Activated CD4-positive, alpha-beta T cell treated with anti-CD3 and anti-CD28 coated beads, Interleukin-2, amount 10 ng/mL, durations not matched to agents 24 days and 14 days (primary cell): ENCODE measurements at regions of chr20 and their contacts with region 1.

Region 1: GRCh38 chr20:54199721-54200176 is 8.1 kb upstream of the PFDN4 start:
- DNase-seq: peak; percentile 90
- H3K4me3 Mint-ChIP-seq: no peak overlapping the region
- H3K27ac Mint-ChIP-seq: no peak overlapping the region
- H3K4me1 Mint-ChIP-seq: no peaks in the 10 kb centered on the region
- H3K27me3 Mint-ChIP-seq: peaks cover 6% of the 10 kb centered on the region

Region 2: DNA sequence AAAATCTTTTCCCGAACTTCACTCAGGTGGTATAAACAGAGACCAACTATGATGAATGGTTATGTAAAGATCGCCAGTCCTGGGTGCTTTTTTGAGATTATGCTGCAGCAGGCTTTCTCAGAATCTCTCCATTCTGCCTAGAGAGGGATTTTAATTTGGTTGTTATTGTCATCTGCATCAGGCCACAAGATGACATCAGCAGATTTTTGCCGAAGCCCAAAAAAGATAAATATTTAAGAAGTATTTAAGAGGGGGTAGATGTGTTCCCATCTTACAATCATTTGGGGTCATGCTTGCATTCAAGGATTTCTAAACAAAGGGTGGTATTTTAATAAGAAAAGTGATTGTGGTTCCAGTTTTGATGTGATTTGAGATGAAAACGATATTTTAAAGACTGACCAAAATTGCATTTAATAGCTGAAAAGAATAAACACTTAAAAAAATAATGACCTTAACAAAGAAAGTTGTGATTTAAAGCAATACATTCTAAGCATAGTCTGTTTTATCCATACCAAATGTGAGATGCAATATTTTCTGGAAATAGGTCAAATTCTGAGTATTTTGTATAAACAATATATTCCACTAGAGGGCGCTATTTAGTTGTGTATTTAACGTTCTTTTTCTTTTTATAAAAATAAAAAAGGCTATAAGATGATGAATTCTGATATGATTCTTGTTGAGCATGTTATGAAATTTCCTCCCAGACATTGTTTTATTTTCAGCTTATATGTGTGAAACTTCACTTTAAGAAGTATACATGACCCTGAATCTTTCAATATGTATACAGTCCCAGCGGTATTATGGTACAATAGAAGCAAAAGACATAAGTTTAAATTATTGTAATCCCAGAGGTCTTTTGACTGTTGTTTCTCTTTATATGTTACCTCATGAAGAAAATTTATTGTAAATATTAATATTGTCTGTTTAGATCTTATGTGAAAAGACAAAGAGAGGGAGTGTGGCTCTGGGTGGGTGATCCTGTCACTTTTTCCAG is 1957.2 kb before region 1 on chr20:
- intact Hi-C with region 1: loop called (anchors 5 kb)
- DNase-seq: no peak
- H3K4me3 Mint-ChIP-seq: no peak overlapping the region
- H3K27ac Mint-ChIP-seq: no peak overlapping the region
- H3K4me1 Mint-ChIP-seq: no peaks in the 10 kb centered on the region
- H3K27me3 Mint-ChIP-seq: peaks cover 2% of the 10 kb centered on the region

Region 3: GRCh38 chr20:53718142-53719021 is 481.4 kb before region 1 on chr20:
- intact Hi-C with region 1: no loop called
- DNase-seq: no peak
- H3K4me3 Mint-ChIP-seq: no peak overlapping the region
- H3K27ac Mint-ChIP-seq: no peak overlapping the region
- H3K4me1 Mint-ChIP-seq: peaks cover 15% of the 10 kb centered on the region
- H3K27me3 Mint-ChIP-seq: no peaks in the 10 kb centered on the region

Region 4: DNA sequence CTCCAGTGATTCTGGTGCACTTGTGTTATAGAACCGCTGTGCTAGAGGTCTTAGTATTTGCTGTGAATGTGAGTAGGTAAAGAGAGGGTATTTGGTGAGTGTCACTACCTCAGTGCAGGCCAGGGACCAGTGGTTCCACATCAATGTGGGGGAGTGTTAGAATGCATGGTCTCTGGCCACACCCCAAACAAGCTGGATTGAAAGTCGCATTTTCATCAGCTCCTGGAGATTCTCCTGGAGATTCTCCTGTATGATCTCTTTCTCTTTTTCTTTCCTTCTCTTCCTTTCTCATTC is 102.6 kb before region 1 on chr20:
- intact Hi-C with region 1: loop called (anchors 1 kb)
- DNase-seq: no peak
- H3K4me3 Mint-ChIP-seq: no peak overlapping the region
- H3K27ac Mint-ChIP-seq: no peak overlapping the region
- H3K4me1 Mint-ChIP-seq: no peaks in the 10 kb centered on the region
- H3K27me3 Mint-ChIP-seq: peaks cover 13% of the 10 kb centered on the region

Region 5: GRCh38 chr20:54103067-54103761 is 96.5 kb before region 1 on chr20:
- intact Hi-C with region 1: loop called (anchors 1 kb)
- DNase-seq: peak; percentile 92
- H3K4me3 Mint-ChIP-seq: no peak overlapping the region
- H3K27ac Mint-ChIP-seq: no peak overlapping the region
- H3K4me1 Mint-ChIP-seq: peaks cover 4% of the 10 kb centered on the region
- H3K27me3 Mint-ChIP-seq: peaks cover 9% of the 10 kb centered on the region

Region 6: DNA sequence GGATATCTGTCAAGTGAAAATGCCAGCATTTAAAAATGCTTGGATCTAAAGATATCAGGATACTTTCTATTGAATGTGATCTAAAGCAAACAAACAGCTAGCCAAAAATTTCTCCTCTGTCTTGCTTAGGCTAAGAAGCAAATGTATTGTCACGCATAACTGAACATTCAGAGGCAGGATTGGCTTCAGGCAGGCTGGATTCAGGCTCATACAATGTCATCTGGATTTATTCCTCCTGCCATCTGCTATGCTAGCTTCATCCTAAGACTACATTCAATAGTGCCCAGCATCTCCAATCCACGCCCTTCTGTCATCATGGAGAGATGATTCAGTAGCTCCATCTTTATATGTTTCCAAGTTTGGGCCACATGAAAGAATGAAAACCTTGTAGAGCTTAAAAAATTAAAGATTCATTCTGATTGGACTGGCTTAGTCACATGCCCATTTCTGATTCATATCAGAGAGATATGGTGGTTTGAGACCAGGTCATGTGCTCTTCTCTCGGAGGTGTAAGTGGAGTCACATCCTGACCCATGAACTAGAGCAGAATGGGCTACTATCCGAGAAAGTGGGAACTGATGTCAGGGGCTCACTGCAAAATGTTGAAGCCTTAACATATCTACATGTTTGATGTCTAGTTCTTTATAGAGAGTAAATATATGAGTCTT is 35.4 kb after region 1 on chr20:
- intact Hi-C with region 1: no loop called
- DNase-seq: no peak
- H3K4me3 Mint-ChIP-seq: no peak overlapping the region
- H3K27ac Mint-ChIP-seq: no peak overlapping the region
- H3K4me1 Mint-ChIP-seq: peaks cover 3% of the 10 kb centered on the region
- H3K27me3 Mint-ChIP-seq: peaks cover 8% of the 10 kb centered on the region